Endothelial cell of umbilical vein (primary cell): ENCODE measurements at regions of chr21 and their contacts with region 1.

Region 1: DNA sequence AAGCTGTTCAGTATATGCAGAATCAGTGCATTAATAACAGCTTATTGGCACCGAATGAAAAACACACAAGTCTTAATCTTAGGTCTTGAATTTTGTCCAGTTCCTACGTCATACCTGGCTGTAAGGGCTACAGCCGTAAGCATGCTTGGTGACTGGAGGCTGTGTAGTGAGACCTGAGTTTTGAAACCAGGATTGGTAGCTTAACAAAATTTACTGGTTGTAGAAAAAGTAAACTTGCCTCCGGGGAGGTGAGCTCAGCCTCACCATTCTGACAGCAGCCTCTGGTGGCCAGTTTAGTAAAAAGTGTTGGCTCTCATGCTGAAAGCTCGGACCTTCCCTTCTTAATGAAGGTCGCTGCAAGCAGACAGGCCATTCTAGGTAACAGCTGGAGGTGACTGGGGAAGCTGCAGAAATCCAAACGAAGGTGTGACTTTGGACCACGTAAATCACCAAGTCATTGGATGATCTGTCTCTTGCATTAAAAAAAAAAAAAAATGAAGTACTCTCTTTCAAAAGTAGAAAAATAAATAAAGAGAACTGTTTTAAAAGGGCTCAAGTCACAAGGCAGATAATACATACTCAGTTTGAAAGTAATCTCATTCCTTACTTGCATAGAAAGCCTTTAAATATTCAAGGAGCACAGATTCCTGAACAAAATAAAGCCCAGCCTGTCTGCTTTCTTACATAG is 48.9 kb downstream of the HLCS start:
- DNase-seq: peak; percentile 54
- H3K4me3 ChIP-seq: no peak overlapping the region
- H3K27ac ChIP-seq: no peak overlapping the region
- H3K4me1 ChIP-seq: no peaks in the 10 kb centered on the region
- H3K27me3 ChIP-seq: no peaks in the 10 kb centered on the region
- CTCF ChIP-seq: peak; percentile 57 to 61
- POLR2A ChIP-seq: no peak

Region 2: GRCh38 chr21:36661511-36662309 is 255.9 kb before region 1 on chr21:
- CTCF ChIA-PET with region 1: interaction called, 42 read pairs
- POLR2A ChIA-PET with region 1: no interaction called
- dilution Hi-C with region 1: no loop called
- intact Hi-C with region 1: no loop called
- DNase-seq: peak; percentile 41
- H3K4me3 ChIP-seq: no peak overlapping the region
- H3K27ac ChIP-seq: no peak overlapping the region
- H3K4me1 ChIP-seq: no peaks in the 10 kb centered on the region
- H3K27me3 ChIP-seq: peaks cover 16 to 27% of the 10 kb centered on the region in 2 experiments
- CTCF ChIP-seq: peak; percentile 47 to 51
- POLR2A ChIP-seq: no peak

Region 3: GRCh38 chr21:36747815-36748383 is 169.7 kb before region 1 on chr21:
- CTCF ChIA-PET with region 1: interaction called, 78 read pairs
- POLR2A ChIA-PET with region 1: no interaction called
- dilution Hi-C with region 1: no loop called
- intact Hi-C with region 1: loop called (anchors 2 kb)
- DNase-seq: peak; percentile 35
- H3K4me3 ChIP-seq: peak overlapping the region; percentile 16 to 37 (median 16)
- H3K27ac ChIP-seq: no peak overlapping the region
- H3K4me1 ChIP-seq: peaks cover 7% of the 10 kb centered on the region
- H3K27me3 ChIP-seq: peaks cover 0 to 8% of the 10 kb centered on the region in 2 experiments
- CTCF ChIP-seq: peak; percentile 20 to 39
- POLR2A ChIP-seq: no peak

Region 4: GRCh38 chr21:36854391-36854790 is 63.2 kb before region 1 on chr21:
- CTCF ChIA-PET with region 1: interaction called, 13 read pairs
- POLR2A ChIA-PET with region 1: no interaction called
- dilution Hi-C with region 1: no loop called
- intact Hi-C with region 1: no loop called
- DNase-seq: peak; percentile 47
- H3K4me3 ChIP-seq: no peak overlapping the region
- H3K27ac ChIP-seq: no peak overlapping the region
- H3K4me1 ChIP-seq: peaks cover 4% of the 10 kb centered on the region
- H3K27me3 ChIP-seq: no peaks in the 10 kb centered on the region
- CTCF ChIP-seq: peak; percentile 64 to 68
- POLR2A ChIP-seq: no peak

Region 5: DNA sequence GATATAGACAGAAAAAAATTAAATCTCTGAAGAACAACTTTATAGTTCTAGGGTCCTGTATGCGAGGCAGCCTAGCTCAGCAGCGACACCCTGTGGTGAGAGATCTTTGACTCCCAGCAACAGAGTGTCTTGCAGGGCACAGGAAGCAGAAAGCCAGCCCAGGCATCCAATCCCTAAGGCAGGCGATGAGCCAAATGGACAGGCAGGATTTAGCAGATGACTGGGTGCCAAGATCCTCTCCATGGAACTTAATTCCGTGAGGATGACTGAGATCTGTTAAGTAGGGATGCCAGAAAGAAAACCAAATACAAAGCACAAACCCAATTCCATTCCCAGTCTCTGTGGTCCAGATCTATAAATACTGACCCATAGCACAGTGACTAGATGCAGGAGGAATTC is 10.1 kb after region 1 on chr21:
- CTCF ChIA-PET with region 1: interaction called, 16 read pairs
- POLR2A ChIA-PET with region 1: no interaction called
- dilution Hi-C with region 1: no loop called
- intact Hi-C with region 1: no loop called
- DNase-seq: peak; percentile 80
- H3K4me3 ChIP-seq: no peak overlapping the region
- H3K27ac ChIP-seq: no peak overlapping the region
- H3K4me1 ChIP-seq: no peaks in the 10 kb centered on the region
- H3K27me3 ChIP-seq: no peaks in the 10 kb centered on the region
- CTCF ChIP-seq: peak; percentile 82 to 89
- POLR2A ChIP-seq: no peak